Posterior vena cava (tissue), 2 donors: ENCODE measurements at regions of chrX and their contacts with region 1.

Region 1: GRCh38 chrX:18687856-18688495 is 16.1 kb upstream of the RS1 start:
- DNase-seq: no peak

Region 2: GRCh38 chrX:18861511-18861910 is 173.5 kb after region 1 on chrX:
- intact Hi-C with region 1: loop called in 1 of 2 experiments (anchors 10 kb)
- DNase-seq: no peak